HEK293T (cell line): ENCODE measurements at regions of chr6 and their contacts with region 1.

Region 1: DNA sequence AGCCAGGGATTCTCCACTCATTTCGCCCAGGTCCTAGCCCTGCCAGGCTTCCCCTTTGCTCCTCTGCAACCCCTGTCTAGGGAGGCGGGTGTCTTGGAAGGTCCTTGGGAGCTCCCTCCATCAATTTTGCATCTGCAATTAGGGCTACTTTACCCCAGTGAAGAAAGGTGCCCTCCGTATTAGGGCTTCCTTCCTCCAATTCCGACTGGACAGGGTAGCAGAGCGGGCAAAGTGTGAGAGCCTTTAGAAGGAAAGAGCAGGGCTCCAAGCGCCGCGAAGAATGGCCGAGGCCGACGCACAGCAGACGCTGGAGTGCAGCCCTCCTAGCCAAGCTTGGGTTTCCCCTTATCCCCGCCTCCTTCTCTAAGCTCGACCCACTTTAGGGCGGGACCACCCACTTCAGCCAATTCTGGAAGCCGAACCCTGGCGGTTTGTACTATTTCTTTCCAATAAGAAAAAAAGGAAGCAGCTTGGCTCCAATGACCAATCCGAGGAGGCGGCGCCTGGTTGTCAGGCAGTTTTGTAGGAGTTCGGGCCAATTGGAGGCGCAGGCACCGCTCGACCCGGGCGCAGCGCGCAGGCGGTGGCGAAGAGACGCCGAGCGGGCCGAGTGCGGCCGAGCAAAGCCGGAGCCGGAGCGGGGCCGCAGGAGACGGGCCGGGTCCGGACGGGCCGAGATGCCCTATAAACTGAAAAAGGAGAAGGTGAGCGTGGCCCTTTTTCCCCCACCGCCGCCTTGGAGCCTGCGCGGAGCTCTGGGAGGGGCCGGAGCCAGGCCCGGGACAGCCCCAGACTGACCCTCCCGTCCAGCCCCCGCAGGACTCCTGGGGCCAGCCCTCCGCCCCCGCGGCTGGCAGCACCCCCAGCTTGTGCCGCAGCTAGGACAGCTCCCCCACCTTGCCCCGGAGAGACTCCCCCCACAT is at the start of gene PPP2R5D:
- DNase-seq: peak; percentile 95

Region 2: GRCh38 chr6:42841844-42842584 is 142.2 kb before region 1 on chr6:
- CTCF ChIA-PET with region 1: no interaction called
- POLR2A ChIA-PET with region 1: no interaction called
- DNase-seq: no peak

Region 3: GRCh38 chr6:42873313-42873712 is 110.9 kb before region 1 on chr6:
- CTCF ChIA-PET with region 1: no interaction called
- POLR2A ChIA-PET with region 1: no interaction called
- DNase-seq: no peak

Region 4: GRCh38 chr6:42928986-42929820 is 55.1 kb before region 1 on chr6 and contains the start of gene CNPY3:
- CTCF ChIA-PET with region 1: no interaction called
- POLR2A ChIA-PET with region 1: interaction called, 47 read pairs
- DNase-seq: peak; percentile 90

Region 5: DNA sequence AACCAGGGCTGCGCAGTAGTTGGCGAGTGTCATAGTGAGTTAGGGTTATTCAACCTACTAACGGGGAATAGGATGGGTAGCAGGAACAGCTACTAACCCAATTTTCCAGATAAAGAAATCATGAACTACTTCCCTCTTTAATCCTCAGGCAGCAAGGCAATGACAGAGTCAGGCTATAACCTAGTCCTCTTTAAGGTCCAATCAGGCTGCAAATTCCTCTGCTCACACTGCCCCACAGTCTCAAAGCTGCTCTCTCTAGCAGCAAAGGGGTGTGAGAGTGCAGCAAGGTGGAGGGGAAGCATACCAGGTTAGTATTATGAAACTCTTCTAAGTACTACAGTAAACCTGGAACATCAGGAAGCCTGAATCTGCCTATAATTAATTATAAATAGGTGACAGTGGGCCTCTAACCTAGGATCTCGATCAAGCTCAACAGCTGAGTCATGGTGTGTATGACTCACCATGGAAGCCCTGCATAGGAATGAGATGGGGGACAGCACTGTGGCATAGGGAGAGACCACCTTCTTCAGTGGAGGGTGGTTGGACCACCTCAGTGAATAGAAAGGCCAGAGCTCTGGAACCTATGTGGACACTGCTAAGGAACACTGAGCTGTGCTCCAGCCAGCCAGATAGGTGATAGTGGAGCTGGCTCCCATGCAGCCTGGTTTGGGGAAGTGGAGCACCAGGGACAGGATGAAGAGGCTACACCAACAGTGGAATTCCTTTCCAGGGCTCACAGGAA is 13.2 kb before region 1 on chr6:
- CTCF ChIA-PET with region 1: no interaction called
- POLR2A ChIA-PET with region 1: interaction called, 22 read pairs
- DNase-seq: no peak

Region 6: GRCh38 chr6:43005844-43006243 is 21.6 kb after region 1 on chr6:
- CTCF ChIA-PET with region 1: interaction called, 3 read pairs
- POLR2A ChIA-PET with region 1: interaction called, 78 read pairs
- DNase-seq: no peak

Region 7: GRCh38 chr6:43021270-43022047 is 37.2 kb after region 1 on chr6 and contains the start of gene RRP36:
- CTCF ChIA-PET with region 1: no interaction called
- POLR2A ChIA-PET with region 1: interaction called, 19 read pairs
- DNase-seq: peak; percentile 85

Region 8: GRCh38 chr6:43758617-43759050 is 774.4 kb after region 1 on chr6:
- CTCF ChIA-PET with region 1: no interaction called
- POLR2A ChIA-PET with region 1: no interaction called
- DNase-seq: peak; percentile 75